Right ventricle myocardium inferior (tissue), 1 donor: ENCODE measurements at regions of chr3 and their contacts with region 1.

Region 1: DNA sequence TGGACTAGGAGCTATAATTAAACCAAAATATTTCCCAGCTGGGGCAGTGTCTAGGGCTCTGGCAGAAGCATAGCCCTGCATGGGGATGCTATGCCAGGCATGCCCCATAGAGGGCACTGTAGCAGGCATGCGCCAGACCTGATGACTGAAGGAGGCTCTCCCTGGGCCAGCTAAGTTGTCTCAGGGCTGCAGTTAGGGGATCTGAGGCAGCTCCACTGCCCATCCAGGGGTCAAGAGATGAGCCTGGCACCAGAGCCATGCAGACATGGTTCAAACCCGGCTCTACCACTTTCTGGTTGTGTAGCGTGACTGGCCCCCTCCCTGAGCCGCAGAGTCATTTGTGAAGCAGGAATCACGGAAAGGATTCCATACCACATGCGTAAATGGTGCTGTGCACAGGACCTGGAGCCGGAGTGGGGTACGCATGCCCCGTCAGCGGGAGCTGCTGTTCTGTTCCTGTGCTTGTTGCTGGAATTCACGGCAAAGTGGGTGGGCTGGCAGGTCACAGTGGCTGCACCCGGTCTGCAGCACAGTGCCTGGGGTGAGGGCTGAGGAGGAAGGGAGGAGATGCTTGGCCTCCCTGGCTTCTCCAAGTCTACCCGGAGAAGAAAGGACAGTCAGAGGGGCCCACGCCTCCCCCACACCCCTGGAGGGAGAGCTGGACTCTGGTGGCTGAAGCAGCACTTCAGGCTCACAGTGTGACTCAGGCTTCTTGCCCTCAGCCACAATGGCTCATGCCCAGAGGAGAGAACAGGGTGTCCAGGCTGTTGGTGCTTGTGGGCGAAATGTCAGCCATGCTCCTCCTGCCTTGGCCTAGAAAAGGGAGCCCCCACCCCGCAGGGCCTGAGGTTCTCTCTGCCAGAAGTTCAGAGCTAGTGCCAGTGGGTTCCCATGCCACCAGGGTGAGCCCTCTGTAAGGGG is 43.1 kb downstream of the DNASE1L3 start:
- DNase-seq: peak; percentile 79
- ATAC-seq: peak; percentile 77

Region 2: GRCh38 chr3:57951066-57951882 is 216.4 kb before region 1 on chr3:
- intact Hi-C with region 1: loop called (anchors 5 kb)
- DNase-seq: peak; percentile 83
- ATAC-seq: peak; percentile 94

Region 3: DNA sequence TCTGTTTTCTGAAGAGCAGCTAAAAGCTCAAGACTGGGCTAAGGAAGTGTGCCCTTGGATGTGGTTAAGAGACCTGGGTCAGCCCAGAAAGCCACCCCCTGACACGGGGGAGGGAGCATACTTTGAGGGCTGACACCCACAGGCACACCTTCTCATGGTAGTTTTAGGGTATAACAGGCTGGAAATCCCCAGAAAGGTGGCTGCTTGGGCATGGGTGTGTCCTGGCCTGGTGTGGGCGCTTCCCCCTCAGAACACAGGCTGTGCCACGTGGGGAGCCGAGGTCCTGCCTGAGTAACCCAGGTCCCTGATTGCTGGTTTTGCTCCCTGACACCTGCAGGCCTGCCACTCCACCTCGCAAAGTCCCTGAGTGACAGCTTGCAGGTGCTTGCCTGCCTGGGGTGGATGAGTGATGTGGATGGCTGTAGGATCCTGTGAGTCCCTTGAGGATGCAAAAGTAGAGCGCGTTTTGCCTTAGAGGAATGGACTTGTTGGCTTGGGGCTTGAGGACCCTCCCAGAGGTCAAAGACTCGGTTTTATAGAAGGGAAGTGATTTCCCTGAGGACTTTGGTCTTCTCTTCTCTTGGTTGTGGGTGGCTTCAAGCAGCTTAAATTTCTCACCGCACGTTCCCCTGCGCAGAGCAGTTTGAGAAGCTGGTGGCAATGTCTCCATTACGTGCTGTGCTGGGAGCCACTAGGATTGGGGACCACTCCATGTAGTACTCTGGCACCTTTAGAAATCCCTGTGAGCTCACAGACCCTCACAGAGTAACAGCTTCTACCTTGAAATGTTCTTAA is 51.3 kb before region 1 on chr3:
- intact Hi-C with region 1: loop called (anchors 1 kb)
- DNase-seq: no peak
- ATAC-seq: no peak